ENCODE measurements at regions of chr16 and their contacts with region 1.

Region 1: DNA sequence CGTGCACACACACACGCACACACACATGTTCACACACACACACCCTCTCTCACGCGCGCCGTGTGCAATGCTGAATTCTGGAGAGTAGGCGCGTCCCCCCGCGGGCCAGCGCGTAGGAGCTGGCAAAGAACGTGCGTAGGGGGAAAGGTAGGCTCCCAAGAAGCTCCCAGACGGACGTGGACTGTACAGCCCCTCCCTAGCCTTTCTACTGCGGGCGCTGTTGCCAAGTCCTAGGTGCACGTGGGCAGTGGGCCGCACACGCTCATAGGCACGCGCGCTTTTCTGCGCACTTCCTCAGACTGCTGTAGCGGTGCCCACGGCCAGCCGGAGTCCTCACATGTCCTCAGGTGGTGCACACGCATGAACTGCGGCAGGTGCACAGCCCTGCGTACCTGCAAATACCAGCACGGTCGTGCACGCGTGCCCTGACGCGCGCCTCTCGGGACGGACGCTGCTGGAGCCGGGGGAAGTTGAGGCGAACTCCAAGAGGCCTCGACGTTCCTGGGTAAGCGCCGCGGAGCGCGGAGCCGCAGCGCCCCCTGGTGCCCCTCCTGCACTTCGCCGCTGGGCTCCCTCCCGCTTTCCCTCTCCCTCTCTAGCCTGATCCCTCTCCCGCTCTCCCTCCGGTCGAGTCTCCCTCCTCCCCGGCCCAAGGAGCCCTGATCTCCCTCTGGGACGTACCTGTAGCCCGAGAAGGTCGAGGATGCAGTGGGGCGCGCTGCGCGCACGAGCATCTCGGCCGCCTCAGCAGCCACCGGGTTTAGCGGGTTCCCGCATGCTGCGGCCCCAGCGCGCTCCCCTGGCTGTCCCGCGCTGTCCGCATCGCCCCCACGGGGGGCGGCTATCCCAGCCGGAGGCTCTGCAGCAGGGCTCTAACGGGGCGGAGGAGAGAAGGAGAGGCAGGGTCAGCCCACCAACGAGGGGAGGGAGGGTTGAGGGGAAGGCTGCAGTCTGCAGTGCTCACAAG is 749 bp downstream of the GRIN2A start:
- DNase-seq: peak; percentile 69 to 92 (median 74)
- H3K4me3 ChIP-seq: peak overlapping the region; percentile 37 to 81 (median 65)
- H3K27ac ChIP-seq: peak overlapping the region in 58 of 59 donors; percentile 6 to 93 (median 84)
- H3K27me3 ChIP-seq: peaks cover 0 to 45% (median 9%) of the 10 kb centered on the region in 45 donors
- CTCF ChIP-seq: peak; percentile 65 to 99 (median 93)

Region 2: DNA sequence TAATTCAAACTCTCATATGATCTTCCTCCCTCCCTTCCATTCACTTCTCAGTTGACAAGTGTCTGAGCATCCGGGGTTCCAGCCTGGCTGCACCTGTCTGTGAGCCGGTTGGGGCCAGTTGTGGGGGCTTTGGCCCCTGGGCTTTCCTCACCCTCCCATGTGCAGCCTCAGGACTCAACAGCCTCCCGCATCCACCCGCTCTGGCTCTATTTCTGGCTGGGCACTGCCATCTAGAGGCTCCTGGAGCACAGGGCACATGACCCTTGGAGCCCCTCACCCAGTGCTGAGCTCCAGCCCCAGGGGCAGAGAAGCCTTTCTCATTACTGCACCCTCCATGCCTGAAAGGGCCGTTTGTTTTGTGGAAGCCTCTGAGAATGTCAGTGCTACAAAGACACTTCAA is 1046.7 kb before region 1 on chr16:
- intact Hi-C with region 1: loop called in 1 of 2 experiments (anchors 2 kb)
- DNase-seq: peak in 5 of 10 donors; percentile 30 to 62 (median 39)
- H3K4me3 ChIP-seq: no peak overlapping the region
- H3K27ac ChIP-seq: no peak overlapping the region
- H3K27me3 ChIP-seq: no peaks in the 10 kb centered on the region
- CTCF ChIP-seq: peak in 53 of 56 donors; percentile 35 to 74 (median 53)

Region 3: GRCh38 chr16:9647981-9648712 is 533.3 kb before region 1 on chr16:
- intact Hi-C with region 1: loop called (anchors 5 kb)
- DNase-seq: peak in 2 of 10 donors; percentile 12 to 29
- H3K4me3 ChIP-seq: no peak overlapping the region
- H3K27ac ChIP-seq: no peak overlapping the region
- H3K27me3 ChIP-seq: no peaks in the 10 kb centered on the region
- CTCF ChIP-seq: peak; percentile 46 to 78 (median 70)

Region 4: DNA sequence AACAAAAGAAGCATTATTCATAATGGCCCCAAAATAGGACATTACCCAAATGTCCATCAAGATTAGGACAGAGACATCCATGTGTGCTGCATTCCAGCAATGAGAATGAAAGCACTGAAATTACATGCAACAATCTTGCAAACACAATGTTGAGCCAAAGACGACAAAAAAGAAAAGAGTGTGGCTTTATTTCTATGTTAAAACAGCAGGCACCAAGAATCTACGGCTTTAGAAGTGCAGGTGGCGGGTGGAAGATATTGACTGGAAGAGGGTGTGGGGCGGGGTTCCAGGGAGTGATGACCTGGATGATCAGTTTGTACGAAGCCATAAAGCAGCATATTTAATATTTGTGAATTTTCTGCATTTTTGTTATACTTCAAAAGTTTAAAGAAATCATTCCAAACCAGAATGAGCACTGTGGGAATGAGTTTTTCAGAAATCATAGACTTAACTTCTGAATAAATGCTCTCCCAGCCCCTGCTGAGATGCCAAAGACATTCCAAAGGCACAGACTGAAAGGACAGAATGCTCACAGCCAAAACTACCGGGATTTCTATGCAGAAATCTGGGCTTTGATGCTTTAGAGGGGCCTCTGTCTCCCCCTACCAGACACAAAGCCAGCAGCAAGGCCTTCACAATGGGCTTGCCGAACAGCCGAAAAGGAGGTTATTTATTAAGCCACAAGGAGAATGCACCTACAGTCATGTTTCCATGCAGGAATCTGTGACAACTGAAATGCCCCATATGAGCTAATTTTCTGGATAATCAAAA is 360.8 kb before region 1 on chr16:
- intact Hi-C with region 1: loop called in 1 of 2 experiments (anchors 5 kb)
- DNase-seq: peak in 1 of 10 donors; percentile 9
- H3K4me3 ChIP-seq: peak overlapping the region in 5 of 59 donors; percentile 10 to 38 (median 13)
- H3K27ac ChIP-seq: peak overlapping the region in 57 of 59 donors; percentile 7 to 94 (median 73)
- H3K27me3 ChIP-seq: no peaks in the 10 kb centered on the region
- CTCF ChIP-seq: peak in 17 of 56 donors; percentile 11 to 35 (median 21)

Region 5: DNA sequence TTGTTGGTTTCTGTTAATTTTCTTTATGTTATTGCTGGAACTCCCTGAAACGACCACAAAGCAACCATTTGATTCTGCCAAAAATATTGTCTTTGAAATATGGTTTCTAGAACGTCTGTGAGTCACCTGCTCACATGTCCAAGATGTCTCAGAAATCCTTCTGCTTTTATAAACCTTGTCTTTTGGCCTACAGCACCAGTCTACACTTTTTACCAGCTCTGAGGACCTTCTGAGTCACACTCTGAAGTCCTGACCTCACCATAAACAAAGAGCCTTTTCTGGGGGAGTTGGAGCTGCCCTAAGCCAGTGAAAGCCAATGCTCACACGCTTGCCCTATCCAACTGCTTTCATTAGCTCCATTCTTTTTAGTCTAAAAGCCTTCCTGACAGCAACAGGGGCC is 54.8 kb before region 1 on chr16:
- intact Hi-C with region 1: loop called in 1 of 2 experiments (anchors 2 kb)
- DNase-seq: no peak
- H3K4me3 ChIP-seq: peak overlapping the region in 2 of 59 donors; percentile 21
- H3K27ac ChIP-seq: peak overlapping the region in 56 of 59 donors; percentile 6 to 90 (median 72)
- H3K27me3 ChIP-seq: peaks cover 0 to 3% (median 0%) of the 10 kb centered on the region in 45 donors
- CTCF ChIP-seq: no peak

Measured in dorsolateral prefrontal cortex (tissue), 120 donors.